Endothelial cell of umbilical vein (primary cell): ENCODE measurements at regions of chr10 and their contacts with region 1.

Region 1: DNA sequence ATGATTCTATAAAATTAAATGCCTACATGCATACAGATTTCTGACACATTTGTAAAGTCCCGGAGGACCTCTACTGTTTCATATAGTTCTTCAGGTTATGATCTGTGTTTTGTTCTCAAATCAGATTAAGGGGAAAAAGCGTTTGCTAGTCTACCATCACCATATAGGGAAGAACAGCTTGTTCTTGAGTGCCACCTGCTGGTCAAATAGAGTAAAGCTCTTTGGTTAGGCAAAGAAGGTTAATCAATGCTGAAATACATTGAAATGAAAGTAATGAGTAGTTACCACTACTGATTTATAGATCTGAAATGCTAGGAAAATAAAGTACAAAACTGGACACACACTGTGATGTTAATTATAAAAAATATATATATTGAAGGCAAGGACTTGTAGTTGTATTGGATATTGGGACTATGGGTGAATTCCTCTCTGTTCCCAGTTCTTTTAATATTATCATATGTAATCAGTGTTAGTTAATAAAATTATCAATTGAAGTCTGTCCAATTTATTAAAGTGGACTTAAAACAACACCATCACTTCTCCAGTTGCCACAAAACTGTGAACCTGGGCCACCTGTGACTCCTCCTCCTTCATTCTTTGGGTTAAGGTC is 72.6 kb upstream of the PDLIM1 start:
- DNase-seq: peak; percentile 71
- H3K4me3 ChIP-seq: no peak overlapping the region
- H3K27ac ChIP-seq: no peak overlapping the region
- H3K4me1 ChIP-seq: peaks cover 11% of the 10 kb centered on the region
- H3K27me3 ChIP-seq: no peaks in the 10 kb centered on the region
- CTCF ChIP-seq: peak; percentile 58 to 69
- POLR2A ChIP-seq: no peak

Region 2: DNA sequence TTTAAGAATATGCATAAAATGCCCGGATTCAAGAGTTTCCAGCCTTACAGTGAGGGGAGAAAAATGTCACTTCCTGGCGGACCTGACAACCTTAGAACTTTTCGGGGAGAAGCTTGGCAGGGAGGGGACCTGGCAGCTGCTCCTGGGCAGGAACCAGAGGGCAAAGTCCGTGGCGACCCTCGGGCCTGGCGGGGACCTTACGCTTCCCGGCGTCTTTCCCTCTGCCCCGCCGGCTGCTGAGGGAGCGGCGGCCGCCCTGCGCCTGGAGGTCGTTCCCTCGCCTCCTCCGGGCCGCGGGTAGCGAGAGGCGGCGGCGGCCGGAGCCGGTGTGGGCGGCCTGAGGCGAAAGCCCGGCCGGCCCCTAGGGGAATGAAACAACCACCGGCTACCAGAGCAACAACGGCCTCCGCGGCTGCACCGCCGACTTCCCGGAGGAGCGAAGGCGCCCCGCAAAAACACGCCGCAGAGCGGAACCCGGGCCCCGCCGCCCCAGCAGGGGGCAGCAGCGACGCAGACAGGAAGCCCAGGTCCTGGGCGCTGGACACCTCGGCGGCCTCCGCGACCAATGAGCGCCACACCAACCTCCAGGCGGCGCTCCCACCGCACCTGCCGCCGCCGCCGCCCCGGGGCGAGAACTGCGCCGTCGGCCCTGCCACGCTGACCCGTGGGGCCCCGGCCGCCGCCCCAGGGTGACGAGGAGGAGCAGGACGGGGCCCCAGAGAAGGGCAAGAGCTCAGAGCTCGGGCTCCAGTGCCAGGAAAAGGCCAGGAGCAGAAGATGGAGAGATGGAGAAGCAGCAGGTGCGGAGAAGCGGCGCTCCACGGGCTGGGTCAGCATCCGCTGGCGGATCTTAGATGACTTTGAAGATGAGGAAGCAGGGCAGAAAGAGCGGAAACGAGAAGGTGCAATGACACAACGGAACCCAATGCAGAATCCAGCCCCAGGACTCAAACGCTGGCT is 179.9 kb before region 1 on chr10:
- CTCF ChIA-PET with region 1: interaction called, 15 read pairs
- POLR2A ChIA-PET with region 1: no interaction called
- dilution Hi-C with region 1: no loop called
- intact Hi-C with region 1: loop called (anchors 1 kb)
- DNase-seq: peak; percentile 80
- H3K4me3 ChIP-seq: peak overlapping the region; percentile 44 to 84 (median 80)
- H3K27ac ChIP-seq: peak overlapping the region; percentile 62
- H3K4me1 ChIP-seq: peaks cover 15% of the 10 kb centered on the region
- H3K27me3 ChIP-seq: peaks cover 0 to 10% of the 10 kb centered on the region in 2 experiments
- CTCF ChIP-seq: peak; percentile 96 to 99
- POLR2A ChIP-seq: peak; percentile 70

Region 3: GRCh38 chr10:95241533-95241932 is 121.9 kb before region 1 on chr10:
- CTCF ChIA-PET with region 1: interaction called, 492 read pairs
- POLR2A ChIA-PET with region 1: interaction called, 4 read pairs
- dilution Hi-C with region 1: no loop called
- intact Hi-C with region 1: loop called (anchors 1 kb)
- DNase-seq: no peak
- H3K4me3 ChIP-seq: no peak overlapping the region
- H3K27ac ChIP-seq: no peak overlapping the region
- H3K4me1 ChIP-seq: peaks cover 3% of the 10 kb centered on the region
- H3K27me3 ChIP-seq: no peaks in the 10 kb centered on the region
- CTCF ChIP-seq: no peak
- POLR2A ChIP-seq: no peak

Region 4: DNA sequence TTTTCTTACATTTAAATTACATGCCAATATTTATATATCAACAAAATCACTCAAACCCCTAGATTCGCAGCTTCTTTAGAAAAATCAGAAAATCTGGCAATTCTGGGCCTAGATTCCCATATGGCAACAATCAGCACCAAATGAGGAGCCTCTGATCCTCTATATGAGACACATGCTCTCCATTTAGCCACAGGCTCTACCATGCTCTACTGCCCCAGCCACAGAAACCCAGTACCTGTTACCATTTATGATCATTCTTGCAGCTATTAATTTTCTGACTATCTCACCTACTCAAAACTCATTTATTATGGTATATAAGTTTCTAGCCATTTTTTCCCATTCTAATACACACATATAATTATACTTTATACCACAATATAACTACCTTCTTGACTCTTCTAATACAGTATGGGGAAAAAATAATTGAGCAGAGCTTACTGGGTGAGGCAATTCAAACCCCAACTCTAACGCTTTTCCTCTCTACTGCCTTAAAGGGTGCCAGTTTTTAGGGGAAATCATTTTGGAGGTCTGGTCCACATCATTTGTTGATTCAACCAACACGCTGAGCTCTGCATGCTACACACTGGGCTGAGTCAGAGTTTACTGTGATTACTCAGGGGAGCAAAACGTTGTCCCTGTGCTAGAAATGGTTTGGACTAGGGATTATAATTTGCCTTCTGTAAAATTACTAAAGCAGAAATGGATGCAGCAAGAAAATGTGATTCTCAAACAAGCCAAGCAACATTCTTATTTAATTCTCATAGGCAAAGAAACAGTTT is 84.2 kb before region 1 on chr10:
- CTCF ChIA-PET with region 1: interaction called, 16 read pairs
- POLR2A ChIA-PET with region 1: no interaction called
- dilution Hi-C with region 1: no loop called
- intact Hi-C with region 1: no loop called
- DNase-seq: no peak
- H3K4me3 ChIP-seq: no peak overlapping the region
- H3K27ac ChIP-seq: no peak overlapping the region
- H3K4me1 ChIP-seq: peaks cover 7% of the 10 kb centered on the region
- H3K27me3 ChIP-seq: no peaks in the 10 kb centered on the region
- CTCF ChIP-seq: no peak
- POLR2A ChIP-seq: no peak

Region 5: GRCh38 chr10:95346715-95347401 is 16.6 kb before region 1 on chr10:
- CTCF ChIA-PET with region 1: interaction called, 11 read pairs
- POLR2A ChIA-PET with region 1: no interaction called
- dilution Hi-C with region 1: no loop called
- intact Hi-C with region 1: no loop called
- DNase-seq: peak; percentile 23
- H3K4me3 ChIP-seq: no peak overlapping the region
- H3K27ac ChIP-seq: no peak overlapping the region
- H3K4me1 ChIP-seq: peaks cover 2% of the 10 kb centered on the region
- H3K27me3 ChIP-seq: no peaks in the 10 kb centered on the region
- CTCF ChIP-seq: no peak
- POLR2A ChIP-seq: no peak